Thyroid gland (tissue), 4 donors: ENCODE measurements at regions of chr1 and their contacts with region 1.

Region 1: GRCh38 chr1:93846211-93846991 is 32.6 kb downstream of the DNTTIP2 start:
- DNase-seq: peak; percentile 90
- H3K4me3 ChIP-seq: peak overlapping the region; percentile 23 to 78 (median 66)
- H3K27ac ChIP-seq: peak overlapping the region; percentile 96 to 99 (median 97)
- H3K4me1 ChIP-seq: peaks cover 6 to 9% of the 10 kb centered on the region in 2 donors
- H3K27me3 ChIP-seq: no peaks in the 10 kb centered on the region
- CTCF ChIP-seq: peak in 3 of 6 experiments; percentile 35 to 51 (median 39)
- POLR2A ChIP-seq: peak in 1 of 2 donors; percentile 83

Region 2: GRCh38 chr1:93304716-93305138 is 541.7 kb before region 1 on chr1:
- intact Hi-C with region 1: loop called (anchors 10 kb)
- DNase-seq: peak; percentile 33 to 44
- H3K4me3 ChIP-seq: no peak overlapping the region
- H3K27ac ChIP-seq: no peak overlapping the region
- H3K4me1 ChIP-seq: no peaks in the 10 kb centered on the region
- H3K27me3 ChIP-seq: no peaks in the 10 kb centered on the region
- CTCF ChIP-seq: peak; percentile 66 to 89 (median 83)
- POLR2A ChIP-seq: no peak

Region 3: GRCh38 chr1:93447516-93448291 is 398.7 kb before region 1 on chr1 and contains the start of gene FNBP1L:
- intact Hi-C with region 1: loop called (anchors 10 kb)
- DNase-seq: peak; percentile 88 to 89
- H3K4me3 ChIP-seq: peak within 1 kb of the TSS; percentile 57 to 99 (median 95)
- H3K27ac ChIP-seq: peak within 1 kb of the TSS; percentile 89 to 98 (median 93)
- H3K4me1 ChIP-seq: peaks cover 0 to 8% of the 10 kb centered on the region in 2 donors
- H3K27me3 ChIP-seq: no peaks in the 10 kb centered on the region
- CTCF ChIP-seq: no peak
- POLR2A ChIP-seq: peak; percentile 78 to 91
- total RNA-seq, gene FNBP1L: 68.7 to 86.0 (median 72.9) TPM

Region 4: DNA sequence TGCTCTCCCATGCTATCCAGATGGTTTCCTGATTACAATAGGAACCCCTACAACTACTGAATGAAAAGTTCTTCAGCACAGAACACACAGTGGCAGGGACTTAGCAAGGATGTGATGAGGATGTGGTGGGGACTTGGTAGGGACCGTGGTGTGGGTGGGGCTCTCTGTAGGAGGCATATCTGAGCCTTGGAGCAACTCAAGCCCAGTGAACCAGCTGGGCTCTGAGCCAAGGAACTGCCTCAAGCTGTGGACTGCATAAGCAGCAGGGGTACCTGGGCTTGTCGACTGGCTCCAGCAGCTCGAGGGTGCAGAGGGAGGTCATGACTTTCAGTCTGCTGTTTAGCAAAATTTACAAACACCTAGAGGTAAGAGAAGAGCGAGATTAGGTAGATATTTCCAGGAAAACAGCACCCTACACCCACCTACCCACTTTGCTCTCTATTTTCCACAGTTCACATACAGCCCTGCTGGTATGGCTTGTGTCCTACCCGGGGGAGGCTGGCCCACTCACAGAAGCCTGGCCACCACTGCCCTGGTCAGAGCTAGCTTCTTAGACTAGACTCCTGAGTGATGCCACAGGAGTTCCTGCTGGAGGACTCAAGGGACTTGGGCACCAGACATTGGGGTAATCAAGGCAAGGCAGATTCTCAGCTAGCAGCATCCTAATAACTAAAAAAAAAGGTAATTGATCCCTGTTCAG is 149.6 kb after region 1 on chr1:
- intact Hi-C with region 1: no loop called
- DNase-seq: peak; percentile 86 to 91
- H3K4me3 ChIP-seq: no peak overlapping the region
- H3K27ac ChIP-seq: no peak overlapping the region
- H3K4me1 ChIP-seq: peaks cover 0 to 6% of the 10 kb centered on the region in 2 donors
- H3K27me3 ChIP-seq: no peaks in the 10 kb centered on the region
- CTCF ChIP-seq: no peak
- POLR2A ChIP-seq: no peak